AG04449 (cell line): ENCODE measurements at regions of chr7 and their contacts with region 1.

Region 1: GRCh38 chr7:45923290-45923689 is 2.2 kb upstream of the IGFBP3 start:
- DNase-seq: no peak
- H3K4me3 ChIP-seq: no peak overlapping the region
- CTCF ChIP-seq: peak; percentile 87

Region 2: DNA sequence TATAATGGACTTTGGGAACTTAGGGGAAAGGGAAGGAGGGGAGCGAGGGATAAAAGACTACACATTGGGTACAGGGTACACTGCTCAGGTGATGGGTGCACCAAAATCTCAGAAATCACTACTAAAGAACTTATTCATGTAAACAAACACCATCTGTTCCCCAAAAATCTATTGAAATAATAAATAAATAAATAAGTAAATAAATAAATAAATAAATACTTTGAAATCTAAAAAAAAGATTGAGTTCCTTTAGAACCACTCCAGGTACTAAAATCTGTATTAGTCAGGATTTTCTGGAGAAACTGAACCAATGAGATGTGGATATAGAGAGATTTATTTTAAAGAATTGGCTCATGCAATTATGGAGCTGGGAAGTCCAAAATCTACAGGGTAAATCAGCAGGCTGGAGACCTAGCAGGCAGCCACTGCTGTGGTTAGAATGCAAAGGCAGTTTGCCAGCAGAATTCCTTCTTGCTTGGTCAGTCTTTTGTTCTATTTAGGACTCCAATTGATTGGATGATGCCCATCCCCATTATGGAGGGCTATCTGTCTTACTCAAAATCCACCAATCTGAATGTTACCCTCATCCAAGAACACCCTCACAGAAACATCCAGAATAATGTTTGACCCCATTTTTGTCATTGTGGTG is 26.1 kb before region 1 on chr7:
- CTCF ChIA-PET with region 1: interaction called, 58 read pairs
- POLR2A ChIA-PET with region 1: no interaction called
- DNase-seq: no peak
- H3K4me3 ChIP-seq: no peak overlapping the region
- CTCF ChIP-seq: no peak

Region 3: DNA sequence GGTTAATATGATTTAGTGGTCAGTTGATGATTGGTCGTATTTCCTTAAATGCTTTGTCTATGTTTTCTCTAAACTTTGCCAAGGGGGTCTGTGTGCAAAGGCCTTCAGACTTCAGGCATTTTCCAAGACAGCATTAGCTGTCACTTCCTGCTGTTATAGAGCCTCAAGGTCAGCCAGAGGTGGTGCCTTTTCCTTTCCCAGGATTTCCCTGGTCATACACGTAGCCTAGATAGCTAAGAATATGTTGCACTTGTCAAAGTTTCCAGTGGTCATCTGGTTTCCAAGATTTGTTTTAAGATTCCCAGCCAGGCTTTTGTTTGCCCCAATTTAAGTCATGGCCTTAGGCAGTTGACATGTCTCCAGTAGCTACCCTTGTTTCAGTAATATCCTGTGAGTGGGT is 131.0 kb after region 1 on chr7:
- CTCF ChIA-PET with region 1: interaction called, 12 read pairs
- POLR2A ChIA-PET with region 1: no interaction called
- DNase-seq: no peak
- H3K4me3 ChIP-seq: no peak overlapping the region
- CTCF ChIP-seq: no peak

Region 4: GRCh38 chr7:46145412-46145811 is 222.1 kb after region 1 on chr7:
- CTCF ChIA-PET with region 1: interaction called, 34 read pairs
- POLR2A ChIA-PET with region 1: no interaction called
- DNase-seq: peak; percentile 100
- H3K4me3 ChIP-seq: no peak overlapping the region
- CTCF ChIP-seq: no peak

Region 5: GRCh38 chr7:46247664-46248063 is 324.4 kb after region 1 on chr7:
- CTCF ChIA-PET with region 1: interaction called, 16 read pairs
- POLR2A ChIA-PET with region 1: interaction called, 3 read pairs
- DNase-seq: peak; percentile 53
- H3K4me3 ChIP-seq: no peak overlapping the region
- CTCF ChIP-seq: no peak

Region 6: DNA sequence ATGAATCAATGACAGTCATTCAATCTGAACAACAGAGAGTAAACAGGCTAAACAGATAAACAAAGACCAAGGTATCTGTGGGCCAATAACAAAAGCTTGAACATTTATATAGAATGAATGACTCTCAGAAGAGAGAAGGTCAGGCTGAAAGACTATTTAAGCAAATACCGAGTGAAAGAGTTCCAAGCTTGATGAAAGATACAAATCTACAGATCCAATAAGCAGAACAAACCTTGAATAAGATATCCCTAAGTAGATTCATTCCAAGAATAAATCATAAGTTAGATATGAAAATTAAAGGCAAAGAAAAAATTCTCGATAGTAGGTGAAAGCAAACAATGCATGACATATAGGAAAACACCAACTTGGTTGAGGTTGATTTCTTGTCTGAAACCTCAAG is 374.2 kb after region 1 on chr7:
- CTCF ChIA-PET with region 1: interaction called, 15 read pairs
- POLR2A ChIA-PET with region 1: no interaction called
- DNase-seq: no peak
- H3K4me3 ChIP-seq: no peak overlapping the region
- CTCF ChIP-seq: no peak

Region 7: GRCh38 chr7:46369933-46370654 is 446.8 kb after region 1 on chr7:
- CTCF ChIA-PET with region 1: interaction called, 15 read pairs
- POLR2A ChIA-PET with region 1: interaction called, 4 read pairs
- DNase-seq: peak; percentile 68
- H3K4me3 ChIP-seq: no peak overlapping the region
- CTCF ChIP-seq: no peak